HCT116 (cell line): ENCODE measurements at regions of chr12 and their contacts with region 1.

Region 1: DNA sequence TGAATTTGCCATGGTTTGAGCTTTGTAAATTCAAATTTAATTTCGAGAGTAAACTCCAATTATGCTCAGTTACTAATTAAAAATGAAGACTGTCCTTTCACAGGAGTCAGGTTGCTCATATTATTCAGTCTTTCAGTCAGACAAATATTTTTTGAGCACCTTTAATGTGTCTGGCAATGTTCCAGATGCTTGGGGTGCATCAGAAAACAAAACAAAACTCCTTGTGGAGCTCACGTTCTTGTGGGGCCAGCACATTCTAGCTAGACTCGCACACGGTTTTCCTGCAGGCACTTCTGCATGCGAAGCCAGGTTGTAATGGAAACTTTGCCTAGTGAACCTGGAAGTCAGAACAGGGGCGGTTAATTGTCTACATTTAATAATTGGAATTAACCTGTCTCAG is 64.0 kb upstream of the ATF1 start:
- DNase-seq: no peak
- ATAC-seq: no peak
- H3K4me3 ChIP-seq: no peak overlapping the region
- H3K27ac ChIP-seq: no peak overlapping the region
- H3K4me1 ChIP-seq: no peaks in the 10 kb centered on the region
- H3K27me3 ChIP-seq: no peaks in the 10 kb centered on the region
- CTCF ChIP-seq: no peak
- POLR2A ChIP-seq: no peak
- RAD21 ChIP-seq: no peak

Region 2: DNA sequence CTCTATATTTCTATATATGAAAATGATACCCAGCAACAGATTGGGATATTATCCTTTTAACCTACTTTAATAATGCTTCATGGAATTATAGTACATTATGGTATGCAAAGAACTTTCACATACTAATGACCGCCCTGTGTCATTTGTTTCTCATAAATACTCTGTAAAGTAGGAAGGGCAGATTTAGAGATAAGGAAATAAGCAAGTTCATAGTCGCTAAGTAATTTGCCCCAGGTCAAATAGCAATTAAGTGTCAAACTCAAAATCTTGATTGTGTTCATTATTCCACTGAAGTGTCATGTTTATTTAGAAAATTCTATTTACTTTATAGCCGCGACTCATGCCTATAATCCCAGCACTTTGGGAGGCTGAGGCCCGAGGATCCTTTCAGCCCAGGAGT is 34.8 kb before region 1 on chr12:
- CTCF ChIA-PET with region 1: no interaction called
- POLR2A ChIA-PET with region 1: no interaction called
- RAD21 ChIA-PET with region 1: no interaction called
- intact Hi-C with region 1: loop called (anchors 5 kb)
- DNase-seq: no peak
- ATAC-seq: no peak
- H3K4me3 ChIP-seq: no peak overlapping the region
- H3K27ac ChIP-seq: no peak overlapping the region
- H3K4me1 ChIP-seq: 0 out of 4 replicates have a peak, but pooled peaks cover 0 to 4% of the 10 kb centered on the region in 2 experiments
- H3K27me3 ChIP-seq: no peaks in the 10 kb centered on the region
- CTCF ChIP-seq: no peak
- POLR2A ChIP-seq: no peak
- RAD21 ChIP-seq: no peak